GM10248 (cell line): ENCODE measurements at regions of chr1 and their contacts with region 1.

Region 1: GRCh38 chr1:150609732-150610131 is 19.7 kb downstream of the ENSA start:
- DNase-seq: no peak
- CTCF ChIP-seq: no peak

Region 2: DNA sequence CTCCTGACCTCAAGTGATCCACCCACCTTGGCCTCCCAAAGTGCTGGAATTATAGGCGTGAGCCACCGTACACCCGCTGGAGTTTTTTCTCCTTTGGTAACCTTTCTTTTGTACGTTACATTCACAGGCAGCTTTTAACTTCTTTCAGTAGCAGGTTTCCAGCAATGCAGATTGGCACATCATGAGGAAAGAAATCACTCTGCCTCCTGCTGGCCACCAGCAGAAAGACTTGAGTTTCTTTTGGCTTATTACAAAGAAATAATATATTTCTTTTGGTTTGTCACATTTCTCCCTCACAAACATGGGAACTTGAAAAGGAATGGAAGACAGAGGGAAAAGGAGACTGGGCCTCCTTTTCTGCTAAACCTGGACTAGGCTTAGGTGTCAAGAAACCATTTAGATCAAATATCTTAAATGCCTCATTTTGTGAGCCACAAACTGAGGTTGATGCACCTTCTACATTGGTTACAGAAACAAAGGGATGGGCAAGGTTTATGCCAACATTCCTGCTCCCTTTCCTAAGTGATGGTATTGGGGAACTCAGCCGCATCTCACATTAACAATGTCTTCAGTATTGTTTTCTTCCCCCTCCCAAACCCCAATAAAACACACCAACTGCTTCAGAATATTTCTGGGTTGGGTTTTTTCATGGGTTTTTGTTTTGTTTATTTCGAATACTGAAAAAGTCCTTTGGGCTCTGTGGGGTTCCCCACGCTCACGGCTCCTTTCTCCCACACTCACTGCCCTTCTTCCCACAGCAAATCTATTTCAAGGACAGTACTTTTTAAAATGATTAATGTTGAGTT is 12.0 kb after region 1 on chr1:
- CTCF ChIA-PET with region 1: interaction called, 18 read pairs
- POLR2A ChIA-PET with region 1: no interaction called
- DNase-seq: peak; percentile 55
- CTCF ChIP-seq: peak; percentile 65

Region 3: DNA sequence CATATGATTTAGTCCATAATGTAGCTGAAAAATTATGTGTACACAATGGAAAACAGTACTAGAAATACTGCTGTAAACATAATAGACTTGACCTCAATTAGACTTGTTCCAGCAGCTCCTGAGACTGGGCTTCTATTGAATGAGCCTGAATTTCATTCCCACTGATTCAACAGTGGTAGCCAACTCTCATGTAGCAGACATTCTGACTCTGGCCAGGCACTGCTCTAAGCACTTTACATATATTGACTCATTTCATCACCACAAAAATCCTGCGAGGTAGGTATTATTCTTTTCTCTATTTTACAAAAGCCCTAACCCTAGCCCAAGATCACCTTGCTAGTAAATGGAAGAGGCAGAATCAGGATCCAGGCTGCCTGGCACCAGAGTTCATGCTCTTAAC is 168.7 kb after region 1 on chr1:
- CTCF ChIA-PET with region 1: no interaction called
- POLR2A ChIA-PET with region 1: no interaction called
- DNase-seq: no peak
- CTCF ChIP-seq: no peak